ENCODE measurements at regions of chr10 and their contacts with region 1.

Region 1: DNA sequence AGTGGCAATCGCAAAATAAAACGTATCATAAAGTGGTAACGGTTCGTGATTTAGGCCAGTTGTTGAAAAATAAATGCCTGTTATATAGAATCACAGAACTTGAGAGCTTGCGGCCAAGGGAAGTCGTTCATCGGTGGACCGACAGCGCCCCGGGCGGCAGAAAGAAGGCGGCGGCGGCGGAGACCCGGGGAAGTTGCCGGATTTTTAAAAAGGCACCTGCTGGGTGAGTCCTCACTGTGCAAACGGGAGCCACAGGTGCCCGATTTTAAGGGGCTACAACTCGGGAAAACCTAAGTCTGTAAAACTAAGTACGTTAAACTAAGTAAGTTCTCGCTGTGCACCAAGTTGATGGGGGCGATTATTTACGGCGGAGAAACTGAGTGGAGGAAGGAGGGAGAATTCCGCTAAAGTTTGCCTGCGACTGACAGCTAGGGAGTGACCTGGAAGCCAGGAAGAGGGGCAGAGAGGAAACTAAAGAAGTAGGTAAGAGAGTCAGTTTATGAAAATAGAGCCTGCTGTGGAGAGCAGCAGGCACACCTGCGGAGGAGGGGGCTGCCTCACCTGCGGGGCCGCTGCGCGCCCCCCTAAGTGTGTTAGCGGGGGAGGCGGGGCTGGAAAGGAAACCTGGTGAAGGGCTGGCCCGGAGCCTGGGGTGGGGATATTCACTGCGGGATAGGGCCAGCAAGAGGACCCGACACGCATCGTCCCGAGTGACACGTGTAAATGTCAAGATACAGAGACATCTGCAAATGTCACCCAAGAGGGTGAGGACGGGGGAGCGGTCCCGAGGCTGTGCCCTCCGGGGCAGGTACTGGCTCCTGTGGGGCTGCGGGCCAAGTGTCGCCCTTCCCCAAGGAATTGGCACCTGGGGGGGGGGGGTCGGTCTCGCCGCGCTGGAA is 1.0 kb downstream of the ADAM12 start:
- DNase-seq: peak; percentile 46
- H3K4me3 ChIP-seq: peak overlapping the region; percentile 13 to 56 (median 52)
- H3K27ac ChIP-seq: no peak overlapping the region
- H3K4me1 ChIP-seq: peaks cover 18% of the 10 kb centered on the region
- H3K27me3 ChIP-seq: no peaks in the 10 kb centered on the region
- CTCF ChIP-seq: peak; percentile 63 to 75

Region 2: DNA sequence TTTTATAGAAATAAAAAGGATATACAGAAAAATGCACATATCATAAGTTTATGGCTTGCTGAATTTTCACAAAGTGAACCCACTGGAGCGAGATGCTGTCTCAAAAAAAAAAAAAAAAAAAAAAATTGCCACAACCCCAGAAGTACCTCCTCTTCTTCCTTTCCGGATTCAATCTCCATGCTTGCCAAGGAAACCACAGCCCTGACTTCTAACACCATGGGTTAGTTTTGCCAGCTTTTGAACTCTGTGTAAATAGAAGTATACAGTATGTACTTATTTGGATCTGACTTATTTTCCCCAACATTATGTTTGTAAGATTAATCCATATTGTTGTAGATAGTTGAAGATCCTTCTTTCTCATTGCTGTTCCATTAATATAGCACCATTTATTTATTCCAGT is 450.9 kb before region 1 on chr10:
- CTCF ChIA-PET with region 1: no interaction called
- dilution Hi-C with region 1: no loop called
- in situ Hi-C with region 1: no loop called
- intact Hi-C with region 1: loop called (anchors 1 kb)
- DNase-seq: no peak
- H3K4me3 ChIP-seq: no peak overlapping the region
- H3K27ac ChIP-seq: no peak overlapping the region
- H3K4me1 ChIP-seq: peaks cover 7% of the 10 kb centered on the region
- H3K27me3 ChIP-seq: no peaks in the 10 kb centered on the region
- CTCF ChIP-seq: no peak

Region 3: DNA sequence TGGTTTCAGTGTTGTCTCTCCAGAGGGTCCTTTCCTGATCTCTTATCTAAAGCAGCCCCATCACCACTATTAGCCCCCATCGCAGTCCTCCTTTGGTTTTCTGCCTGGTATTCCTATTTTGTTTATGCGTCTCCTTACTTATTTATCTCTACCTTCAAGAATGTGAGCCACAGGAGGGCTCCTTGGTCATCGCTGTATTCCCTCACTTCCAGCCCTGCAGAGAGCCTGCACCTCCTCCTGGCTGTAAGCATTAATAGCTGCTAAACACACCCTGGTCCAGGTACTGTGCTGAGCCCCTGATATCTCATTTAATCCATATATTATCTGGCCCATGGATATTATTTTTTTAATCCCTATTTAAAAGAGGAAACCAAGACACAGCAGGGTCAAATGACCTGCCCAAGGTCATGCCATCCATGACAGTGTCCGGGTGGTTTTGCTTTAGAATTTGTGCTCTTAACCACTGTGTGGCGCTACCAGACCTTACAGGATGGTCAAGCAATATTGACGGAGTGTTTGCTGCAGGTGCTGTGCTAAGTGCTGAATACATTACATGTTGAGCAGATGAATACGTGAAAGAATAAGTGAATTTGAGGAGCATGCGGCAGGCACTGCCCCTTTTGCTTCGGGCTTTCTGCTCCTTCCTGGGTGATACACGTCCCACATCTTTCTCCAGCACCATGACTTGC is 226.2 kb before region 1 on chr10:
- CTCF ChIA-PET with region 1: no interaction called
- dilution Hi-C with region 1: no loop called
- in situ Hi-C with region 1: no loop called
- intact Hi-C with region 1: loop called (anchors 1 kb)
- DNase-seq: no peak
- H3K4me3 ChIP-seq: no peak overlapping the region
- H3K27ac ChIP-seq: no peak overlapping the region
- H3K4me1 ChIP-seq: no peaks in the 10 kb centered on the region
- H3K27me3 ChIP-seq: no peaks in the 10 kb centered on the region
- CTCF ChIP-seq: peak in 1 of 2 donors; percentile 36

Region 4: DNA sequence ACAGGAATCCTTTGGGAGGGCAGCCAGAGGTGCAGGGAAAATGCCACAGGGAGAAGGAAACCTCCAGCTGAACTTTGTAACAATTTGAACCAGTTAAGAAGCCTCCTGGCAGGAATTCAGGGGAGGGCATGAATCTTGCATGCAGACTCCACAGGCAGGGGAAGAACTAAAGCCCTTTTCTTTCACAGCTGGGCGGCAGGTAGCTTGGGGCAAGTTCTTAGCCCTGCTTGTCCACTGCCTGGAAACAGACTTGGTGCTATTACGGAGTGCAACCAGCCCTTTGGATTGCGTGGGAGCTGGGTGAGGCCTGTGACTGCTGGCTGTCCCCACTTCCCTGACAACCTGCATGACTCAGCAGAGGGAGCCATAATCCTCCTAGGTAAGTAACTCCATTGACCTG is 52.7 kb after region 1 on chr10:
- CTCF ChIA-PET with region 1: no interaction called
- dilution Hi-C with region 1: no loop called
- in situ Hi-C with region 1: no loop called
- intact Hi-C with region 1: no loop called
- DNase-seq: peak; percentile 20
- H3K4me3 ChIP-seq: no peak overlapping the region
- H3K27ac ChIP-seq: peak overlapping the region; percentile 6
- H3K4me1 ChIP-seq: peaks cover 11% of the 10 kb centered on the region
- H3K27me3 ChIP-seq: no peaks in the 10 kb centered on the region
- CTCF ChIP-seq: no peak

Region 5: DNA sequence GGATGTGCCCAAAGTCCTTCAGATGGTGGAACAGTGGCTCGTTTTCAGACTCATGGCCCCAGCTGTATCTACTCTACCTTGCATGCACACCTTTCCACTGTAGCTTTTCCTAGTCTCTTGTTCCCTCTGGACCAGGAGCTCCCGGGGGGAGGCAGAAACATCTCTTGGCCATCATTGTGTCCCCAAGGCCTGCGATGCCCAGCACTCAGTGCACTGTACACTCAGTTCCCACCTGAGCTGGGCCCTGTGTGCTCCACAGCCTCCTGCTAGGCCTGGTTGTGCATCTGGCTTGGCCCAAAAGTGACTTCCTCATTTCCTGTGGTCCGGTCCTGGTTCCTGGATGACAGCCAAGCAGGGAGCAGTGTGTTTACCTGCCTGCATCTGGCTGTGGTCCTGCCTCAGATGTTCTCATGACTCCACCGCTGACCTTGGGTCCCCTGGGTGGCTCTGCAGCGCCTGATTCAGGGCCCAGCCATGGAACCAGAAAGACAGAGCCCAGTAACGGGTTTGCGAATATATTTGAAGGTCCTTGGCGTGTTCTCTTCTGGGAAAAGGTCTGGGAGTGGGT is 508.0 kb after region 1 on chr10:
- CTCF ChIA-PET with region 1: no interaction called
- dilution Hi-C with region 1: no loop called
- in situ Hi-C with region 1: no loop called
- intact Hi-C with region 1: no loop called
- DNase-seq: no peak
- H3K4me3 ChIP-seq: no peak overlapping the region
- H3K27ac ChIP-seq: no peak overlapping the region
- H3K4me1 ChIP-seq: no peaks in the 10 kb centered on the region
- H3K27me3 ChIP-seq: no peaks in the 10 kb centered on the region
- CTCF ChIP-seq: no peak

Measured in mammary epithelial cell (primary cell).